Breast epithelium (tissue), 4 donors: ENCODE measurements at regions of chr1 and their contacts with region 1.

Region 1: GRCh38 chr1:155117617-155118016 is 10.1 kb upstream of the EFNA1 start:
- DNase-seq: no peak
- H3K4me3 ChIP-seq: no peak overlapping the region
- H3K27ac ChIP-seq: no peak overlapping the region
- H3K4me1 ChIP-seq: no peaks in the 10 kb centered on the region
- H3K27me3 ChIP-seq: no peaks in the 10 kb centered on the region
- CTCF ChIP-seq: no peak
- POLR2A ChIP-seq: no peak

Region 2: GRCh38 chr1:155139895-155140631 is 22.4 kb after region 1 on chr1 and contains the start of gene DPM3:
- intact Hi-C with region 1: loop called (anchors 1 kb)
- DNase-seq: peak; percentile 81 to 87
- H3K4me3 ChIP-seq: peak within 1 kb of the TSS; percentile 56 to 94 (median 69)
- H3K27ac ChIP-seq: peak within 1 kb of the TSS; percentile 86 to 97
- H3K4me1 ChIP-seq: peaks cover 0 to 4% of the 10 kb centered on the region in 2 donors
- H3K27me3 ChIP-seq: no peaks in the 10 kb centered on the region
- CTCF ChIP-seq: no peak
- POLR2A ChIP-seq: peak; percentile 81
- total RNA-seq, gene DPM3: 53.7 to 69.4 (median 68.2) TPM